Posterior vena cava (tissue), 2 donors: ENCODE measurements at regions of chr6 and their contacts with region 1.

Region 1: GRCh38 chr6:139638179-139638941 is 263.9 kb upstream of the CITED2 start:
- DNase-seq: no peak

Region 2: DNA sequence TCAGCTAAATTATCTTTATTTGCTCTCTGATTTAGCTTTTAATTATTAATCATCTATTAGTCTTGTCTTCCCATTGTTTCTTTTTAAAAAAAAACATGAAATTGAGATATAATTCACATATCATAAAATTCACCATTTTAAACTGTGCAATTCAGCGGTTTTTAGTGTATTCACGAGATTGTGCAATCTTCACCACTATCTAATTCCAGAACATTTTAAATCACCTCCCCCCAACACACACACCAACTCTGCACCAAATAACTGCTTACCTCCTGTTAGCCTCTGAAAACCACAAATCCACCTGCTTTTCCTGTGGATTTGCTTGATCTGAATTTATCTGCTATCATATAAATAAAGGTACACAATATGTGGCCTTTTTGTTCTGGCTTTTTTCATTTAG is 618.6 kb before region 1 on chr6:
- intact Hi-C with region 1: loop called in 1 of 2 experiments (anchors 5 kb)
- DNase-seq: no peak

Region 3: GRCh38 chr6:139605350-139605749 is 33.0 kb before region 1 on chr6:
- intact Hi-C with region 1: no loop called
- DNase-seq: no peak

Region 4: GRCh38 chr6:139846538-139847456 is 208.4 kb after region 1 on chr6:
- intact Hi-C with region 1: no loop called
- DNase-seq: no peak